Dorsolateral prefrontal cortex (tissue), 120 donors: ENCODE measurements at regions of chr9 and their contacts with region 1.

Region 1: GRCh38 chr9:123349691-123350480 is 6.1 kb upstream of the CRB2 start:
- DNase-seq: peak in 6 of 10 donors; percentile 50 to 71 (median 60)
- H3K4me3 ChIP-seq: peak overlapping the region in 17 of 59 donors; percentile 16 to 44 (median 29)
- H3K27ac ChIP-seq: no peak overlapping the region
- H3K27me3 ChIP-seq: no peaks in the 10 kb centered on the region
- CTCF ChIP-seq: peak; percentile 50 to 97 (median 92)

Region 2: DNA sequence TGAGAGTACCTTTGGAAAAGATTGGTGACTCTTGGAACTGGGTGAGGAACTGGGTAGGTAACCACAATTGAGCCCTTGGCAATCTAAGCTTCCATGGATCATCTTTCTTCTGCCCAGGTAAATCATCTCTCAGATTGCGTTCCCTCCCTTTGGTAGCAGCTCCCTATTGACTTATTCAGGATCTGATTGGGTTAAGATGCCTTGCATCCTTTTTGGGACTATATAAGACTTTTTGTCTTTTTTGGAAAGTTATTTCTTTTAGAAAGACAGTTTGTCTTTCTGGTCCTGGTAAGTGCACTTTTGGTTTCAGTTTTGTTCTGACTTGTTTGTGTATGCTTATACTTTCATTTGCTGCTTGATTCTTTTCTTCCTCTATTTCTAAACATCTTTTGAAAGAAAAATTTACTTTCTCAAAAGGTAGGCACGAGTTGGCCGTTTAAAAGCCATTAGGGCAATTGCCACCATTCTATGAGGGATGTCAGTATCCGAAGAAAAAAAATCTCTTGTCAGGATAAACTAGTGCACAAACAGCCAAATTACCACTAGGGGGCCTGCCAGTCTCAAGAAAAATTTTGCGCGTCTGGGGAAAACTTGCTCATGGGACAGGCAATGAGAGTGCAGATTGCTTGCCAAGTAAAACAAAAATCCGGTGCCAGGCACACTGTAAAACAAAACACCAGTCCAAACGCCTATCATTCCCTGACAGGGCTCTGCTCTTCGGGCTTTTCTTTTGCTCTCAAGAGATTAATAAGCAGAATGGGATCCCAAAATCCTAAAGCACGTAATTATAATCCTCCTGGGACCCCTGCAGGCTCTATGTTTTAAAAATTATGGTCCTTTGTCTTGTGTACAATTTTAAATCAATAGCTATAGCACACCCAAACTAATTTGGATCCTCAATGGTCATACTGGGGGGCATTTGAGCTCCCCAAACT is 885.0 kb before region 1 on chr9:
- intact Hi-C with region 1: loop called in 1 of 2 experiments (anchors 2 kb)
- DNase-seq: peak; percentile 36 to 83 (median 69)
- H3K4me3 ChIP-seq: peak overlapping the region in 56 of 59 donors; percentile 18 to 67 (median 47)
- H3K27ac ChIP-seq: peak overlapping the region in 3 of 59 donors; percentile 3 to 64 (median 18)
- H3K27me3 ChIP-seq: no peaks in the 10 kb centered on the region
- CTCF ChIP-seq: peak; percentile 72 to 96 (median 89)

Region 3: GRCh38 chr9:122810306-122810946 is 539.5 kb before region 1 on chr9:
- intact Hi-C with region 1: loop called in 1 of 2 experiments (anchors 10 kb)
- DNase-seq: peak; percentile 63 to 88 (median 76)
- H3K4me3 ChIP-seq: peak overlapping the region in 1 of 59 donors; percentile 21
- H3K27ac ChIP-seq: peak overlapping the region in 1 of 59 donors; percentile 31
- H3K27me3 ChIP-seq: no peaks in the 10 kb centered on the region
- CTCF ChIP-seq: peak; percentile 76 to 97 (median 88)

Region 4: DNA sequence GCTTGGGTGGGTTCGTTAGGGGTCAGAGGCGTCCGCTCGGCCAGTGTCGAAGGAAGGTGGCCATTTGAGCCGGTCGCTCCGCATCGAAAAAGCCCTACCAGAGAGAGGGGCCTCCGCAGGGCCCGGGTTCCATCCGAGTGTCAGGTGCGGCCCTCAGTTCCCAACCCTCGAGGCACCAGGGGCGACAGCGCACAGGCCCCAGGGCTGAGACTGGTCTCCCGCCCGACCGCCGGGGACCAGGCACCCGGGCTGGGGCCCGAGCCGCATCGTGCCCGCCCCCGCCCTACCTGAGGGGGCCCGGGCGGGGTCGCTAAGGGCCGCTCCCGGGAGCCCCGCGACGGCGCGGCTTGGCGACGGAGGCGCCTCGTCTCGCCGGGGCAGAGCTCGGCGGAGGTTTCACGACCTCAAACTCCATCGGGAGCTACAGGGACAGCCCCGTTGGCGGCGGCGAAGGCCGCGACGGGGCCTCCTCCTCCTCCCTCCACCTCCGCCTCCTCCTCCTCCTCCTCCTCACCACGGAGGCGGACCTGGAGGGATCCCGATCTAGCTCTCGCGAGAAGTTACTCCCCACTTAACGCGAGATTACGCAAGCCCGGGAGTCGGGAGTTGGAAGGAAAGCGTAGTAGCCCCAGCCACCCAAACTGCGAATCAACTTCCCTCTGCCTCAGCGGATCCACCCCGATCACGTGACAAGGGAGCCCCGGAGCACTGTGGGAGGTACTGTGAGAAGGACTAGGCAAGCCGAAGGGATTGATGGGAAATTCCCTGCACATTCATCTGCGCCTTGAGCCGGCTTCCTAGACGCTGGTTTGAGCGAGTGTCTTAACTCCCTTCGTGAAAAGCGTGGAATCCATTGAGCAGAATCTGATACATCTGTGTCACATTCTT is 444.8 kb before region 1 on chr9 and contains the start of gene RC3H2:
- intact Hi-C with region 1: loop called in 1 of 2 experiments (anchors 10 kb)
- DNase-seq: peak; percentile 99 to 100 (median 100)
- H3K4me3 ChIP-seq: peak within 1 kb of the TSS; percentile 57 to 99 (median 90)
- H3K27ac ChIP-seq: peak within 1 kb of the TSS; percentile 85 to 99 (median 96)
- H3K27me3 ChIP-seq: no peaks in the 10 kb centered on the region
- CTCF ChIP-seq: peak in 17 of 56 donors; percentile 4 to 48 (median 23)
- total RNA-seq, gene RC3H2: 46.8 to 94.9 (median 69.0) TPM

Region 5: DNA sequence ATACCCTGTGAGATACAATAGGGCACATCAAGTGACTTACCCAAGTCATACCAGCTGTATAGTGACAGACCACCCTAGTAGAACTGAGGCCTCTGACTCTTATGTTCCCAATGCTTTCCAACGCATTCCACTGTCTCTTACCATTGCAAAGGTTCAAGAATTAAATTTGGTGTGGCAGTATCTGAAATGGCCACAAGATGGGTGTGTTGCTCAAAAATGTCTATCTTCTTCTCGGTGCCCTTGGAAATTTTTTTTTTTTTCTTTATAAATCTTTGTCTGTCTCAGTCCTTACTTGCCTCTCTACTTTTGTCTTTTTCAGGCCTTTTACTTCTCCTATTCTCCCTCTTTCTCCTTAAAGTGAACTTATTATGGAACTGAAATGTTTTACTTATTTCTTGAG is 268.1 kb before region 1 on chr9:
- intact Hi-C with region 1: loop called (anchors 2 to 5 kb)
- DNase-seq: no peak
- H3K4me3 ChIP-seq: no peak overlapping the region
- H3K27ac ChIP-seq: no peak overlapping the region
- H3K27me3 ChIP-seq: no peaks in the 10 kb centered on the region
- CTCF ChIP-seq: peak; percentile 36 to 76 (median 60)

Region 6: DNA sequence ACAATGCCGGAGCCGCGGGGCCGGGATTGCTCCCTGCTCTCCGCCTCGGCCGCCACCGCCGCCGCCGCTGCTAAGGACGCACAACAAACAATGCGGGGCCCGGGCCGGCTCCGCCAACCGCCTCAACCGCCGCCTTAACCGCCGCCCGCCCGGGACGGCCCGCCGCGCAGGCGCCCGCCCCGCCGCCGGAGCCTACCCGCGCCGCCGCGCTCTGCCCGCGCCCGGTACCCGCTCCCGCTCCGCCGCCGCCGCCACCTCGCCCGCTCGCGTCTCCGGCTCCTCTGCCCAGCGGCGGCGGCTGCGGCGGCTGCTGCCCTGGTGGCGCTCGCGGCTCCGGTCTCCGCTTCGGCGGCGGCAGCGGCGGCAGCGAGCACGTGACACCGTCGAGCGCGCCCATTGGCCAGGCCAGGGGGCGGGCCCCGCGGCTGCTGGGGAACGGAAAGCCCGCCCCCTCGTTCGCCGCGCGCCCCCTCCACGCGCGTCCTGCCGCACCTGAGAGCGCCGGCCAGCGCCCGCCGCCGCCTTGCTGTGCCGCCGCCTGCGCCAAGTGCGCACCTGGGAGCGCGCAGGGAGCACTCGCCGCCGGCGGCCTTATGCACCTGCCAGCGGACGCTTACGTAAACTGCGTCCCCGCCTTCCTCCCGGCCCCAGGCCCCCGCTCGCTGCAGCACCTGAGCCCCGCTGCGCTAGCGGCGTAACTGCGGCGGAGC is 81.5 kb before region 1 on chr9 and contains the start of gene STRBP:
- intact Hi-C with region 1: loop called in 1 of 2 experiments (anchors 5 kb)
- DNase-seq: peak; percentile 80 to 97 (median 90)
- H3K4me3 ChIP-seq: peak within 1 kb of the TSS; percentile 64 to 98 (median 90)
- H3K27ac ChIP-seq: peak within 1 kb of the TSS in 57 of 59 donors; percentile 18 to 93 (median 80)
- H3K27me3 ChIP-seq: no peaks in the 10 kb centered on the region
- CTCF ChIP-seq: peak in 27 of 56 donors; percentile 5 to 62 (median 29)
- total RNA-seq, gene STRBP: 42.5 to 205 (median 133) TPM

Region 7: GRCh38 chr9:123389070-123389469 is 39.2 kb after region 1 on chr9:
- intact Hi-C with region 1: loop called (anchors 1 kb)
- DNase-seq: no peak
- H3K4me3 ChIP-seq: no peak overlapping the region
- H3K27ac ChIP-seq: no peak overlapping the region
- H3K27me3 ChIP-seq: no peaks in the 10 kb centered on the region
- CTCF ChIP-seq: no peak